A549 (cell line): ENCODE measurements at regions of chr4 and their contacts with region 1.

Region 1: GRCh38 chr4:128574706-128575105 is 234.8 kb upstream of the JADE1 start:
- DNase-seq: peak; percentile 52 to 93
- ATAC-seq: peak; percentile 70 to 79
- H3K4me3 ChIP-seq: no peak overlapping the region
- H3K27ac ChIP-seq: peak overlapping the region; percentile 97 to 98
- H3K4me1 ChIP-seq: peaks cover 65% of the 10 kb centered on the region
- CTCF ChIP-seq: peak; percentile 78
- EP300 ChIP-seq: no peak
- POLR2A ChIP-seq: no peak
- RAD21 ChIP-seq: peak; percentile 88 to 90

Region 2: GRCh38 chr4:128517739-128518510 is 56.8 kb before region 1 on chr4:
- CTCF ChIA-PET with region 1: interaction called, 11 read pairs
- POLR2A ChIA-PET with region 1: interaction called, 4 read pairs
- DNase-seq: peak; percentile 81 to 93
- ATAC-seq: peak; percentile 97
- H3K4me3 ChIP-seq: no peak overlapping the region
- H3K27ac ChIP-seq: peak overlapping the region; percentile 95 to 99
- H3K4me1 ChIP-seq: peaks cover 66% of the 10 kb centered on the region
- CTCF ChIP-seq: no peak
- EP300 ChIP-seq: peak; percentile 79 to 81; a peak in 4 of 5 replicates
- POLR2A ChIP-seq: no peak
- RAD21 ChIP-seq: peak; percentile 9 to 42; a peak in 2 of 5 replicates

Region 3: GRCh38 chr4:128560754-128561495 is 13.8 kb before region 1 on chr4:
- CTCF ChIA-PET with region 1: interaction called, 13 read pairs
- POLR2A ChIA-PET with region 1: no interaction called
- DNase-seq: peak in 1 of 2 experiments; percentile 90
- ATAC-seq: peak; percentile 87 to 92
- H3K4me3 ChIP-seq: no peak overlapping the region
- H3K27ac ChIP-seq: peak overlapping the region; percentile 93 to 99
- H3K4me1 ChIP-seq: peaks cover 73% of the 10 kb centered on the region
- CTCF ChIP-seq: no peak
- EP300 ChIP-seq: peak; percentile 93 to 96
- POLR2A ChIP-seq: no peak
- RAD21 ChIP-seq: peak; percentile 5 to 48; a peak in 3 of 5 replicates

Region 4: DNA sequence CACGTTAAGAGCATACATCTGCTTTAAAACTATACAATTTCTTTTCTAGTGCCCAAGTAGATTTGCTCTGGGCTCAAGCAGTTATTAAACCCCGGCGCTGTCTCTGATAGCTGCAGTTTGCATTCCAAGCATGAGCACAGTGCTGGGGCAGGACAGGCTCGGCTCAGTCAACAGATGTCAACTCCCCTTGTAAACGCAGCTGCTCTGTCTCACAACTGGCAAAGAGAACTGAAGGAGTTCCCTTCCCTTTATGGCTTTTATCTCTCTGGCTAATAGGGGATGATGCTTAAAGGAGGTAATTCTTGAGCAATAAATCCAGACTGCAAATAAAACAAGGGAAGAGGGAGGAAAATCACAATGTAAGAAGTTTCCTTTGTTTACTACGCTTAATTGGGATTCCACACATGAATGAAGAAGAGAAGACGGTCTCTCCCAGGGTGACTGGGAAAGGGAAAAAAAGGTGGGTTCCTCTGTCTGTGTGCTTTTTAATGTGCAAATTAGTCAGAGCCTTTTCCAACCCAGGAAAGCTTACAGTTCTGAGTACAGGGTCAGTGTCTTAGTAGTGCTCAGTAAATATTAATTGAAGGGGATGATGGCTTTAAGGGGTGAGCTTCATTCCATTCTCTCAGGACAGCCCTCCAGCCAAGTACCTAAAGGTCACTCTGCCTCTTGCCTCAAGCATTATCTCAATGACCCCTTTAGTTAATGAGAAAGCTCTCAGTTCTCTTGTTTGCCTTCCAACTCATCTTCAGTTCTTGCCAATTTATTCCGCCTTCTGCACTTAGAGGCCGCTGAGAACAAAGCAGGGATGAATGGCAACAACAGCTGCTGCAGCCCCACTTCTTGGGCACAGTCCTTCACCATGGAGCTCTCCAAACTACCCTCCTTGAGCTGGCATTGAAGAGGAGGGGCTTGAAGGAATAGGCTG is 79.1 kb after region 1 on chr4:
- CTCF ChIA-PET with region 1: no interaction called
- POLR2A ChIA-PET with region 1: no interaction called
- DNase-seq: no peak
- ATAC-seq: peak in 1 of 2 experiments; percentile 80; a peak in 3 of 6 replicates
- H3K4me3 ChIP-seq: no peak overlapping the region
- H3K27ac ChIP-seq: peak overlapping the region; percentile 19 to 49; a peak in 4 of 6 replicates
- H3K4me1 ChIP-seq: peaks cover 30% of the 10 kb centered on the region
- CTCF ChIP-seq: no peak
- EP300 ChIP-seq: no peak
- POLR2A ChIP-seq: no peak
- RAD21 ChIP-seq: no peak

Region 5: DNA sequence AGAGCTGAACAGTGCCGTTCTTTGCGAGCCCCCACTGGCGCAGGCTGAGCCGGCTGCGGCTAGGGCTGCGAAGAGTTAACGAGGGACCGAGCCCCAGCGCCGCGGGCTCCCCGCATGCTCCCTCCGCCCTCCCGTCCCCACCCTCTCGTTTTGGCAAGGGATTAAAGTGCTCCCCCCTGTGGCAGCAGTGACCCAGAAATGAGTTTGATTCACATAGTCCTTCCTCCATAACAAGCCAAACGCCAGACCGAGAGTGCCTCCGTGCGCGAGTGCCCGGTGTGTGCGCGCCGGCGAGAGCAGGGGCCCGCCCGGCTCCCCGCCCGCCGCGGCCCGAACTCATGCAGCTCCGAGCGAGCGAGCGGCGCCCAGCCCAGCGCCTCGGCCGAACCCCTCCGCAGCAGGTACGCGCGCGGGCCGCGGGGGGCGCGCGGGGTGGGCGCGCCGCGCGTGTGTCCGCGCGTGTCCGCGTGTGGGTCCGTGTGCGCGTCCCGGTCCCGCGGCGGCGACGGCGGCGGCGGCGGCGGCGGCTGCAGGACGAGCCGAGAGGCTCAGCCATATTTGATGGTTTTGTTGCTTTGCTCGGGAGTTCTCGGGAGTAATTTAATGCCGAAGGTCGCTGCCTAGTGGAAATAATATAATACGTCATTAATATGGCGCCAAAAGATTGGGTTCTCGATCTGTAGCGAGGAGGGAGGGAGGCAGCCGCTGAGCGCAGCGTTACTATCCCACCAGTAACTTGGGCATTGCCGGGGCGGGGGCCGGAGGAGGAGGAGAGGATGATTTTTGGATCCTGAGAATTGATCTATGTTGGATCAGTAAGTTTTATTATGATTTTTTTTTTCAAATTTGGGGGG is 235.0 kb after region 1 on chr4 and contains the start of gene JADE1:
- CTCF ChIA-PET with region 1: interaction called, 24 read pairs
- POLR2A ChIA-PET with region 1: interaction called, 12 read pairs
- DNase-seq: peak; percentile 79 to 94
- ATAC-seq: peak; percentile 71 to 76
- H3K4me3 ChIP-seq: peak within 1 kb of the TSS; percentile 85
- H3K27ac ChIP-seq: peak within 1 kb of the TSS; percentile 96 to 100
- H3K4me1 ChIP-seq: peaks cover 19% of the 10 kb centered on the region
- CTCF ChIP-seq: peak; percentile 71
- EP300 ChIP-seq: peak; percentile 26 to 41; a peak in 2 of 5 replicates
- POLR2A ChIP-seq: peak; percentile 31
- RAD21 ChIP-seq: peak; percentile 85 to 95
- polyA plus RNA-seq, gene JADE1: 46.7 and 54.6 TPM in 2 replicates

Region 6: GRCh38 chr4:129037093-129037492 is 462.4 kb after region 1 on chr4:
- CTCF ChIA-PET with region 1: no interaction called
- POLR2A ChIA-PET with region 1: no interaction called
- DNase-seq: no peak
- ATAC-seq: no peak
- H3K4me3 ChIP-seq: no peak overlapping the region
- H3K27ac ChIP-seq: no peak overlapping the region
- H3K4me1 ChIP-seq: no peaks in the 10 kb centered on the region
- CTCF ChIP-seq: no peak
- EP300 ChIP-seq: no peak
- POLR2A ChIP-seq: no peak
- RAD21 ChIP-seq: no peak